Breast epithelium (tissue), 4 donors: ENCODE measurements at regions of chr20 and their contacts with region 1.

Region 1: GRCh38 chr20:47991875-47992494 is 206.7 kb upstream of the SULF2 start:
- DNase-seq: no peak
- H3K4me3 ChIP-seq: no peak overlapping the region
- H3K27ac ChIP-seq: no peak overlapping the region
- H3K4me1 ChIP-seq: no peaks in the 10 kb centered on the region
- H3K27me3 ChIP-seq: no peaks in the 10 kb centered on the region
- CTCF ChIP-seq: no peak
- POLR2A ChIP-seq: no peak

Region 2: GRCh38 chr20:47969445-47969844 is 22.5 kb before region 1 on chr20:
- intact Hi-C with region 1: loop called (anchors 2 kb)
- DNase-seq: no peak
- H3K4me3 ChIP-seq: no peak overlapping the region
- H3K27ac ChIP-seq: no peak overlapping the region
- H3K4me1 ChIP-seq: no peaks in the 10 kb centered on the region
- H3K27me3 ChIP-seq: peaks cover 0 to 6% of the 10 kb centered on the region in 2 donors
- CTCF ChIP-seq: no peak
- POLR2A ChIP-seq: no peak